ENCODE measurements at regions of chr14 and their contacts with region 1.

Region 1: GRCh38 chr14:29763342-29763858 is 164.2 kb downstream of the PRKD1 start:
- DNase-seq: no peak

Region 2: GRCh38 chr14:29788093-29788492 is 24.7 kb after region 1 on chr14:
- intact Hi-C with region 1: loop called (anchors 2 kb)
- DNase-seq: no peak

Measured in head of caudate nucleus (tissue), 42 donors.